ENCODE measurements at regions of chr2 and their contacts with region 1.

Region 1: GRCh38 chr2:233129351-233129987 is 69.3 kb downstream of the INPP5D start:
- DNase-seq: peak; percentile 31 to 86
- H3K4me3 ChIP-seq: no peak overlapping the region
- H3K27ac ChIP-seq: no peak overlapping the region
- H3K4me1 ChIP-seq: peaks cover 0 to 8% (median 1%) of the 10 kb centered on the region in 4 experiments
- H3K27me3 ChIP-seq: no peaks in the 10 kb centered on the region
- CTCF ChIP-seq: peak; percentile 80 to 92 (median 82)
- EP300 ChIP-seq: no peak
- POLR2A ChIP-seq: no peak
- RAD21 ChIP-seq: peak; percentile 52 to 70

Region 2: DNA sequence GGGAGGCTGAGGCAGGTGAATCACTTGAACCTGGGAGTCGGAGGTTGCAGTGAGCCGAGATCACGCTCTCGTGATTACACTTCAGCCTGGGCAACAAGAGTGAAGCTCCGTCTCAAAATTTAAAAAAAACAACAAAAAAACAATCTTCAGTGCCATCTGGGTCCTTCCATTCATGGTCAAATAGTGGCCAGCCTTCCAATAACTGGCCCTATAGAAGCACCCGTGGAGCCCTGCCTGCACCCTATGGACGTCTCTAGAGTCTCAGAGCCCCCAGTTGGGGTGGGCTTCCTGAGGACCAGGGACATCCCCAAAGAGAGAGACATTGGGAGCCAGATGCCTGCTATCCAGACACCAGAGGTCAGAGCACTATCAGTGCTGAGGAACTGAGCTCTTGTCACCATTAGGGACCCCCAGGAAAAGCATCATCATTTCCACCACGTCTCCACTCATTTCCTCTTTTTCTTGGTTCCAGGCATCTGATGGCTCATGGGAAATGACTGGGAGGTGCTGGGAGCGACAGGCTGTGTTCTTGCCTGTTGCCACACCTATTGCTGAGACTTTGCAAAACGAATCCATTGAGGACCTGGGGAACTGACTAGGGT is 87.6 kb before region 1 on chr2:
- CTCF ChIA-PET with region 1: no interaction called
- POLR2A ChIA-PET with region 1: no interaction called
- DNase-seq: no peak
- H3K4me3 ChIP-seq: no peak overlapping the region
- H3K27ac ChIP-seq: no peak overlapping the region
- H3K4me1 ChIP-seq: no peaks in the 10 kb centered on the region
- H3K27me3 ChIP-seq: no peaks in the 10 kb centered on the region; a peak in 1 of 7 replicates
- CTCF ChIP-seq: no peak
- EP300 ChIP-seq: no peak
- POLR2A ChIP-seq: no peak
- RAD21 ChIP-seq: no peak

Region 3: GRCh38 chr2:233084488-233084887 is 45.0 kb before region 1 on chr2:
- CTCF ChIA-PET with region 1: interaction called, 11 read pairs
- POLR2A ChIA-PET with region 1: no interaction called
- DNase-seq: no peak
- H3K4me3 ChIP-seq: no peak overlapping the region
- H3K27ac ChIP-seq: no peak overlapping the region
- H3K4me1 ChIP-seq: peaks cover 0 to 5% (median 3%) of the 10 kb centered on the region in 4 experiments; a peak in 3 of 7 replicates
- H3K27me3 ChIP-seq: no peaks in the 10 kb centered on the region
- CTCF ChIP-seq: no peak
- EP300 ChIP-seq: no peak
- POLR2A ChIP-seq: no peak
- RAD21 ChIP-seq: no peak

Region 4: DNA sequence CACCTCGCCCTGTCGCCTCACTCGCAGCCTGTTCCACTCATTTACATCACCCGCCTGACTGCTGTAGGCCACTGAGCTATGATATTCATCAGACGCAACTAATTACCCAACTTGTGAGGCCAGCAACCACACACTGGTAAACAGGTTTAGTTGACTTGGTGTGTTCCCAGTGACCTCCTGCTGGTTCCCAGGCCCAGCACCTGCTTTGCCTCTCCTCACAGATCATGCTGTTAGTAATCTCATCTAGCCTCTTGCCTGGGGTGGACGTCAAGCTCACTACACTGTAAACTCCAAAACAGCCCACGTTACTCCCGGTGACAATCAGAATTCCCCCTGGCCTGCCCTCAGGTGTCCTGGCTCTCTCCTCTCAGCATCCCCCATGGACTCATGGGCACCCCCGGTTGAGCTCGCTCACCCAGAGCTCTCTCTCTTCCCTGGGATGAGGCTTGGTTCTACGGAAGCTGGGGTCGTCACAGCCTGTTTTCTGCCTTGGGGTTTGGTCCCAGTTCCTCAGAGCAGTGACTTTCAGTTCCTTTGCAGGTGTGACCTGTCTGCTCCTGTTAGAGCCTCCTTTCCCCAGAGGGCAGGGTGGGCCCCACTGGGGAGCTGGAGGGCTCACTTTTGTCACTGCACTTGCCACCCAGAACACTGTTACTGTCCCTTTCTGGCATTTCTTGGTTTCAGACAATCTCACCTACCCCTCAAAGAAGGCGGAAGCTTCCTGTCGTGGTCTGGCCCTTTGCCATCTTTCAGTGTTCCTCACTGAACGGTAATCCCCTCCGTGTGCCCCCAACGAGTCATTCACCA is 29.1 kb before region 1 on chr2:
- CTCF ChIA-PET with region 1: interaction called, 33 read pairs
- POLR2A ChIA-PET with region 1: no interaction called
- DNase-seq: no peak
- H3K4me3 ChIP-seq: no peak overlapping the region
- H3K27ac ChIP-seq: no peak overlapping the region
- H3K4me1 ChIP-seq: no peaks in the 10 kb centered on the region
- H3K27me3 ChIP-seq: no peaks in the 10 kb centered on the region
- CTCF ChIP-seq: no peak
- EP300 ChIP-seq: no peak
- POLR2A ChIP-seq: no peak
- RAD21 ChIP-seq: no peak

Region 5: DNA sequence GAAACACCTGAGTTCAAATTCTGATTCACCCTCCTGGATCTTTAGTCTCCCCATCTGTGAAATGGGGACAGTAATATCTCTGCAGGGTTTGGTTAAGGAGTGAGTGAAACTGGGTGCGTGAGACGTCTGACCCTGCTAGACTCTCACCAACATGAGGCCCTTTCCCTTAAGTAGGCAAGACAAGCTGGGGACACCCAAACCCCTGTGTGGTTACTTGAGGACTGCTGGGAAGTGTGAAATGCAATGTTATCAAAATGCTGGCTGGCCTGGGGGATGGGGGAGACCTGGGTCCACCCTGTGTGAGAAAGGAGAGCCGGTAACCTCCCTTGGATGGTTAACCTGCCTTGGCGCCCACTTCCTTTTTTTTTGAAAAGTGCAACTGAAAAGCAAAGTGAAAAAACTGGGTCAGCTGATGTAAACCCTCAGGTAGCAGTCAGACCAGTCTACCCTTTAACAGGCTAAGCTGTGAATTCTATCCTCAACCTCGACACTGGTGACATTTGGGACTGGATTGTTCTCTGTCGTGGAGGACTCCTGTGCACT is 13.0 kb after region 1 on chr2:
- CTCF ChIA-PET with region 1: interaction called, 13 read pairs
- POLR2A ChIA-PET with region 1: interaction called, 6 read pairs
- DNase-seq: no peak
- H3K4me3 ChIP-seq: no peak overlapping the region
- H3K27ac ChIP-seq: no peak overlapping the region
- H3K4me1 ChIP-seq: peaks cover 6 to 24% (median 17%) of the 10 kb centered on the region in 4 experiments; a peak in 6 of 7 replicates
- H3K27me3 ChIP-seq: no peaks in the 10 kb centered on the region
- CTCF ChIP-seq: no peak
- EP300 ChIP-seq: no peak
- POLR2A ChIP-seq: no peak
- RAD21 ChIP-seq: no peak

Region 6: DNA sequence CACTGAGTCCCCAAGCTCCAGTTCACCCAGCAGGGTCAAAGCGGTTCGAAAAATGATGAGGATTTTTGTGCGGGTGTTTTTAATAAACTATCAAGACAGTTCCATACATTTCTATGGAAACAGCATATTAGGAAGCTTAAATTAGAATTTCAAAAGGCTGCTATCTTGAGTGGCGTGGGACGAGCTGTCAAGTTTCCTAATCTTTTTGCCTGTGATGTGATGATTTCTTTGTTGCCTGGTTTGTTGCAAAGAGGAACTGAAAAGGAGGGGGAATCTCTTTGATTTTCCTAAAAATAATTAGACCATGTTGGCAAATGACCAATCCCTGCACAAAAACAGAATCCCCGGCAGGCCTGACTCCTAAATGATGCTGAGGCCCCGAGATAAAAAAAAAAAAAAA is 55.9 kb after region 1 on chr2:
- CTCF ChIA-PET with region 1: interaction called, 13 read pairs
- POLR2A ChIA-PET with region 1: no interaction called
- DNase-seq: no peak
- H3K4me3 ChIP-seq: no peak overlapping the region
- H3K27ac ChIP-seq: no peak overlapping the region
- H3K4me1 ChIP-seq: peaks cover 0 to 4% (median 0%) of the 10 kb centered on the region in 4 experiments; a peak in 2 of 7 replicates
- H3K27me3 ChIP-seq: no peaks in the 10 kb centered on the region
- CTCF ChIP-seq: no peak
- EP300 ChIP-seq: no peak
- POLR2A ChIP-seq: no peak
- RAD21 ChIP-seq: no peak

Measured in H1 (cell line).